HAP-1 (cell line): ENCODE measurements at regions of chr9 and their contacts with region 1.

Region 1: GRCh38 chr9:122810306-122810946 is 10.5 kb downstream of the OR1K1 start:
- DNase-seq: peak; percentile 54 to 76
- H3K4me3 ChIP-seq: no peak overlapping the region
- H3K4me1 ChIP-seq: no peaks in the 10 kb centered on the region
- H3K27me3 ChIP-seq: no peaks in the 10 kb centered on the region

Region 2: GRCh38 chr9:122370869-122371755 is 439.3 kb before region 1 on chr9 and contains the start of gene PTGS1:
- in situ Hi-C with region 1: loop called (anchors 10 kb)
- DNase-seq: peak; percentile 5 to 70
- H3K4me3 ChIP-seq: peak within 1 kb of the TSS; percentile 25
- H3K4me1 ChIP-seq: 0 out of 2 replicates have a peak, but pooled peaks cover 4% of the 10 kb centered on the region
- H3K27me3 ChIP-seq: no peaks in the 10 kb centered on the region; the same call in 1 of the 2 replicates

Region 3: GRCh38 chr9:122464633-122465567 is 345.5 kb before region 1 on chr9:
- in situ Hi-C with region 1: loop called (anchors 5 kb)
- DNase-seq: peak; percentile 51 to 75
- H3K4me3 ChIP-seq: no peak overlapping the region
- H3K4me1 ChIP-seq: no peaks in the 10 kb centered on the region
- H3K27me3 ChIP-seq: peaks cover 7% of the 10 kb centered on the region

Region 4: GRCh38 chr9:122695696-122696095 is 114.7 kb before region 1 on chr9:
- in situ Hi-C with region 1: no loop called
- DNase-seq: no peak
- H3K4me3 ChIP-seq: no peak overlapping the region
- H3K4me1 ChIP-seq: no peaks in the 10 kb centered on the region
- H3K27me3 ChIP-seq: no peaks in the 10 kb centered on the region; the same call in none of the 2 replicates

Region 5: GRCh38 chr9:122754825-122755224 is 55.6 kb before region 1 on chr9:
- in situ Hi-C with region 1: no loop called
- DNase-seq: no peak
- H3K4me3 ChIP-seq: no peak overlapping the region
- H3K4me1 ChIP-seq: no peaks in the 10 kb centered on the region
- H3K27me3 ChIP-seq: no peaks in the 10 kb centered on the region